ENCODE measurements at regions of chr19 and their contacts with region 1.

Region 1: DNA sequence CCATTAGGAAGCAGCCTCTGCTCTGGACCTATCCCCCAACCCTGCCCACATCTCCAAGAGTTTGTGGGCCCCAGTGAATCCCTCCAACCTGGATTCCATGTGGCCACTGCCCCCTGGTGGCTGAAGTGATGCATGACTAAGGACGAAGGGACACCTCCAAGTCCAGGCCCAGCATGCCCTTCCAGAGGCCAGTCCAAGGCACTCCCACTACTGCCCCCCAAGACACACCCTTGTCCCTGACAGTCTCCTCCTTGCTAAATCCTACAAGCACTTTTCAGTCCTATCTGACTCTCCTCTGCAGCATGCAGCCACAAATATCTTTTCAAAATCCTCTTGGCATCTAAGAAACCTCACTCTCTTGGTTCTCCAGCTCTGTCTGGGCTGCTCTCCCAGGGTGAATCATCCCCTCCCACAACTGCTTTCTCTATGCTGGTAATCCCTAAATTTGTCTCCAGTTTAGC is 33.0 kb downstream of the DEDD2 start:
- DNase-seq: peak; percentile 91
- H3K4me3 Mint-ChIP-seq: no peak overlapping the region
- H3K27ac Mint-ChIP-seq: peak overlapping the region; percentile 6
- H3K4me1 Mint-ChIP-seq: peaks cover 18% of the 10 kb centered on the region
- H3K27me3 Mint-ChIP-seq: peaks cover 19% of the 10 kb centered on the region
- CTCF ChIP-seq: peak; percentile 94

Region 2: GRCh38 chr19:42075616-42076379 is 108.6 kb before region 1 on chr19 and contains the start of gene ZNF574:
- CTCF ChIA-PET with region 1: no interaction called
- intact Hi-C with region 1: no loop called
- DNase-seq: peak; percentile 99
- H3K4me3 Mint-ChIP-seq: peak within 1 kb of the TSS; percentile 90
- H3K27ac Mint-ChIP-seq: peak within 1 kb of the TSS; percentile 96
- H3K4me1 Mint-ChIP-seq: peaks cover 31% of the 10 kb centered on the region
- H3K27me3 Mint-ChIP-seq: peaks cover 7% of the 10 kb centered on the region
- CTCF ChIP-seq: no peak
- total RNA-seq, gene ZNF574: 22.0 and 22.1 TPM in 2 replicates

Region 3: GRCh38 chr19:42132851-42133528 is 51.4 kb before region 1 on chr19:
- CTCF ChIA-PET with region 1: interaction called, 18 read pairs
- intact Hi-C with region 1: loop called (anchors 1 kb)
- DNase-seq: peak; percentile 92
- H3K4me3 Mint-ChIP-seq: peak overlapping the region; percentile 60
- H3K27ac Mint-ChIP-seq: no peak overlapping the region
- H3K4me1 Mint-ChIP-seq: peaks cover 30% of the 10 kb centered on the region
- H3K27me3 Mint-ChIP-seq: peaks cover 33% of the 10 kb centered on the region
- CTCF ChIP-seq: peak; percentile 100

Measured in Calu3 (cell line).